ENCODE measurements at regions of chr3 and their contacts with region 1.

Region 1: GRCh38 chr3:178325330-178325729 is 210.9 kb upstream of the KCNMB2 start:
- DNase-seq: peak; percentile 64
- ATAC-seq: peak; percentile 68
- H3K4me3 ChIP-seq: no peak overlapping the region
- H3K27ac ChIP-seq: no peak overlapping the region
- H3K4me1 ChIP-seq: peaks cover 9% of the 10 kb centered on the region
- H3K27me3 ChIP-seq: no peaks in the 10 kb centered on the region
- CTCF ChIP-seq: peak; percentile 64
- POLR2A ChIP-seq: no peak
- RAD21 ChIP-seq: peak; percentile 64

Region 2: GRCh38 chr3:177050501-177051237 is 1274.7 kb before region 1 on chr3:
- CTCF ChIA-PET with region 1: no interaction called
- POLR2A ChIA-PET with region 1: no interaction called
- dilution Hi-C with region 1: no loop called
- in situ Hi-C with region 1: loop called (anchors 25 kb)
- intact Hi-C with region 1: loop called (anchors 1 kb)
- DNase-seq: peak; percentile 64
- ATAC-seq: peak; percentile 83
- H3K4me3 ChIP-seq: no peak overlapping the region
- H3K27ac ChIP-seq: no peak overlapping the region; the same call in 1 of the 2 replicates
- H3K4me1 ChIP-seq: no peaks in the 10 kb centered on the region
- H3K27me3 ChIP-seq: no peaks in the 10 kb centered on the region
- CTCF ChIP-seq: peak; percentile 64
- POLR2A ChIP-seq: 0 out of 2 replicates have a peak, but pooled peaks have one; percentile 35
- RAD21 ChIP-seq: peak; percentile 78

Region 3: DNA sequence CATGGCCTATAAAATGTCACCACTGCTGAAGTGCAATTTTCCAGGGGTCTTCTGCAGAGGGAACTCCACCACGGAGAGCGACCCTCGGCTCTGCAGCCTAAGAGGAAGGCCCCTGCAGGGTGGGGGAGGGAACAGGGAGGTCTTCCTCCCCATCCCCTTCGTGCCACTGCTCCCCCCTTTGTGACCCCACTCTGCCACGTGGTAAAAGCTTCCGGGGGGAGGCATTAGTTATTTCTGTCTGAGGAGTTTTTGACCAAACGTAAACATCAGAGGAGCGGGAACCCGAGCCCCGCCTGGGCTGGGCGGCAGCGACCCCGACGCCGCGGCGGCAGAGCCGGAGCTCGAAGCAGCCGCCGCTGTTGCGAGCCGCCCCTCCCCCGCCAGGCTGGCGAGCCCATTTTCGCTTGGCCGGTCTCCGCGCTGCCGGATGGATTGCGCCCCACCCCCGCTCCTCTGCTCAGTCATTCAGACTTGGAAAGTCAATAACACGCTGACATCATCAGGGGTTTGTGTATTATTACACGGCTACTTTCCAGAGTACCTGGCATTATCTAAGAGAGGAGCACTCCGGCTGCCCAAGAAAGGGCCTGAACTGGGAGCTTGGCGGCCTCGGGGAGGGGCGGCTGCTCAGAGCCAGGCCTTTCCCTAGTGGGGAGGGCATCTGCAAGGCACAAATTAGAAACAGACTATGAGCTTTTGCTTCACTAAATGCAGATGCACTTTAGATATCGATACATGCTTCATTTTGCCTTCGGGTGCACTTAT is 965.6 kb before region 1 on chr3:
- CTCF ChIA-PET with region 1: no interaction called
- POLR2A ChIA-PET with region 1: no interaction called
- dilution Hi-C with region 1: no loop called
- in situ Hi-C with region 1: loop called (anchors 5 kb)
- intact Hi-C with region 1: loop called (anchors 1 kb)
- DNase-seq: peak; percentile 99
- ATAC-seq: peak; percentile 90
- H3K4me3 ChIP-seq: peak overlapping the region; percentile 5; the same call in 1 of the 2 replicates
- H3K27ac ChIP-seq: peak overlapping the region; percentile 59
- H3K4me1 ChIP-seq: peaks cover 27% of the 10 kb centered on the region
- H3K27me3 ChIP-seq: no peaks in the 10 kb centered on the region
- CTCF ChIP-seq: no peak
- POLR2A ChIP-seq: 0 out of 2 replicates have a peak, but pooled peaks have one; percentile 28
- RAD21 ChIP-seq: peak; percentile 71

Region 4: DNA sequence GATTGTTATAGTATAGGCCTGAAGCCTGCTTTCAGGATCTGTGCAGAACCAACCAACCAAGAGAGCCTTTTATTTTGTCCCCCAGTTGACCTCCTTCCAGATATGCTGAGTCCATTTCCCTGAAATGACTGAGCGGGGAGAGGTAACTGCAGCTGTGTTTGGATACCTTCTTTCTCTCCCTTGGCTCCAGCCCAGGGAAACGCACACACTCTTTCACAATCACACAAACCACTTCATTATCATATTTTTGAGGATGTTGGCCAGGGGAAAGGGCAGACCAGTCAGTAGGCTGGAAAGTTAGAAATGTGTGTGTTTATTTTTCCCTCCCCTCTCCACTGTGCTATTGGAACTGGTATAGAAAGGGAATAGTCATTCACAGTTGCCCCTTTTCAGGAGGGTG is 710.3 kb before region 1 on chr3:
- CTCF ChIA-PET with region 1: no interaction called
- POLR2A ChIA-PET with region 1: no interaction called
- dilution Hi-C with region 1: no loop called
- in situ Hi-C with region 1: no loop called
- intact Hi-C with region 1: loop called (anchors 5 kb)
- DNase-seq: peak; percentile 97
- ATAC-seq: peak; percentile 88
- H3K4me3 ChIP-seq: no peak overlapping the region
- H3K27ac ChIP-seq: no peak overlapping the region; the same call in 1 of the 2 replicates
- H3K4me1 ChIP-seq: peaks cover 20% of the 10 kb centered on the region
- H3K27me3 ChIP-seq: no peaks in the 10 kb centered on the region
- CTCF ChIP-seq: no peak
- POLR2A ChIP-seq: no peak
- RAD21 ChIP-seq: 0 out of 2 replicates have a peak, but pooled peaks have one; percentile 4

Region 5: DNA sequence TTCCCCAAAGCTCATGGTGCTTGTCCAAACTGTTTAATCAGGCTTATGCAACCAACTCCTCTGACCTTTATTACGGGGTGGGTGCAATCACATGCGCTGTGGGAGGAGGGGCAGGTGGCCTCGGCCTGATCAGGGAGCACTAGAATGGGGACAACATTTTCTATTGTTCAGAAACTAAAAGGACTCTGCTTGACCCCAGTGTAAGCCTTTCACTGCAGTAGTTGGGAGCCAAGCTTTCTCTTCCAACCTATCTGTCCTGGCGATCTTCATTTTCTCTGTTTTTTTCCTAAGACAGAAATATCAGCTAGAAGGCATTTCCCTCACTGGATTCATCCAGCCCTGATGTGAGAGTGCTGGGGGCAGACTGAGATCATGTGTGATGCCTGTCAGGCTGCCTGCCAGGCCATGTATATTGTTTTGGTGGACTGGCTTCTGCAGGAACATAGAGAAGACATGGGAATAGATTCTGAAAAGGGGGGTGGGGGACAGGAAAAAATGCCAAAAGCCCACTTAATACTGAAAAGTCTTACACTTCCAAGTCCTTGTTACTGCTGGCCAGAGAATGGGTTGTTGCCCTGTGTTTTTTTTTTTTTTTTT is 501.0 kb before region 1 on chr3:
- CTCF ChIA-PET with region 1: no interaction called
- POLR2A ChIA-PET with region 1: no interaction called
- dilution Hi-C with region 1: no loop called
- in situ Hi-C with region 1: no loop called
- intact Hi-C with region 1: loop called (anchors 5 kb)
- DNase-seq: peak; percentile 55
- ATAC-seq: peak; percentile 73
- H3K4me3 ChIP-seq: no peak overlapping the region
- H3K27ac ChIP-seq: peak overlapping the region; percentile 60; the same call in 1 of the 2 replicates
- H3K4me1 ChIP-seq: peaks cover 21% of the 10 kb centered on the region
- H3K27me3 ChIP-seq: no peaks in the 10 kb centered on the region
- CTCF ChIP-seq: no peak
- POLR2A ChIP-seq: no peak
- RAD21 ChIP-seq: no peak

Region 6: DNA sequence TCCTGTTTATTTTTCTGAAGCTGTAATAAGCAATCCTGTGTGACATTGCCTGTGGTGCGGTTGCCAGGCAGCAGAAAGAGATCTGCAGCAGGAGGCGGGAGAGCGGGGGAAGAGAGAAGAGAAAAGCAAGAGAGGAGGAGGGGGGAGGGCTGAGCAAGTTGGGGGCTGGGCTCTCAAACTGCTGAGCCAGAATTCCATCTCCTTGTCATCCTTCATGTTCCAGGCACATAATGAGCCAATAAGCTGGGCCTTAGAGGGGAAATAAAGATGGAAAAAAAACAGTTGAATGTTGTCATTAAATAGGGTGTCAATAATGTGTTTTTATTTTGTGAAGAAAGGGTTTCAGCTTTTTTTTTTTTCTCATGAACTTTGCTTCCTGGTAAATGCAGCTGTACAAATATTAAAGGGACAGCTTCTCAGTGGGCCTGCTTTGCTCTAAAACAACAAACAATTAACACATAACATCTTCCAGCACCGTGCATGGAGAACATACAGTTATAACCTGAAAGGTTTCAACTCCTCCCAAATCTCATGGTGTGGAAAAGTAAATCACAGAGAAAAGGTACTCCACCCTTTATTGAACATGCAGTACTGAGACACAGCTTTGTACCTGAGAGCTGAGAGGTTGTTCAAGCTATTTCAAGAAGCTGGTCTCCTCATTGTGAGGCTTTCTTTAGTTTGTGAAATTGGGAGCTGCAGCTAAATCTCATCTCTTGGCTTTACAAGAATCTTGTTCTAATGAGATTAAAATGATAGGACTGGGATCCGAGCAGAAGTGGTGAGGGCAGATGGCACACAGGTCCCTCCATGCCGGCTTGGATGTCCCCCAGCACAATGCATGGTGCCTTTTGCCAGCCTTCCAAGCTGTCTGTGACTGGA is 240.2 kb before region 1 on chr3:
- CTCF ChIA-PET with region 1: no interaction called
- POLR2A ChIA-PET with region 1: no interaction called
- dilution Hi-C with region 1: no loop called
- in situ Hi-C with region 1: no loop called
- intact Hi-C with region 1: loop called (anchors 10 kb)
- DNase-seq: peak; percentile 83
- ATAC-seq: peak; percentile 93
- H3K4me3 ChIP-seq: no peak overlapping the region
- H3K27ac ChIP-seq: no peak overlapping the region; the same call in 1 of the 2 replicates
- H3K4me1 ChIP-seq: peaks cover 9% of the 10 kb centered on the region
- H3K27me3 ChIP-seq: no peaks in the 10 kb centered on the region
- CTCF ChIP-seq: no peak
- POLR2A ChIP-seq: no peak
- RAD21 ChIP-seq: peak; percentile 19; the same call in 1 of the 2 replicates

Measured in IMR-90 (cell line).